ENCODE measurements at regions of chr20 and their contacts with region 1.

Region 1: GRCh38 chr20:47392015-47392720 is 35.7 kb upstream of the ZMYND8 start:
- DNase-seq: no peak
- ATAC-seq: peak; percentile 74
- H3K4me3 Mint-ChIP-seq: peak overlapping the region; percentile 55
- H3K27ac Mint-ChIP-seq: peak overlapping the region; percentile 95
- H3K4me1 Mint-ChIP-seq: peaks cover 47% of the 10 kb centered on the region
- H3K27me3 Mint-ChIP-seq: no peaks in the 10 kb centered on the region
- CTCF ChIP-seq: no peak

Region 2: GRCh38 chr20:47348539-47349142 is 43.5 kb before region 1 on chr20:
- CTCF ChIA-PET with region 1: no interaction called
- POLR2A ChIA-PET with region 1: interaction called, 17 read pairs
- intact Hi-C with region 1: no loop called
- DNase-seq: no peak
- ATAC-seq: peak; percentile 23
- H3K4me3 Mint-ChIP-seq: no peak overlapping the region
- H3K27ac Mint-ChIP-seq: no peak overlapping the region
- H3K4me1 Mint-ChIP-seq: peaks cover 8% of the 10 kb centered on the region
- H3K27me3 Mint-ChIP-seq: no peaks in the 10 kb centered on the region
- CTCF ChIP-seq: no peak

Region 3: GRCh38 chr20:47487175-47487917 is 95.2 kb after region 1 on chr20:
- CTCF ChIA-PET with region 1: no interaction called
- POLR2A ChIA-PET with region 1: interaction called, 13 read pairs
- intact Hi-C with region 1: loop called (anchors 1 kb)
- DNase-seq: peak; percentile 42
- ATAC-seq: peak; percentile 77
- H3K4me3 Mint-ChIP-seq: peak overlapping the region; percentile 72
- H3K27ac Mint-ChIP-seq: peak overlapping the region; percentile 97
- H3K4me1 Mint-ChIP-seq: peaks cover 79% of the 10 kb centered on the region
- H3K27me3 Mint-ChIP-seq: no peaks in the 10 kb centered on the region
- CTCF ChIP-seq: no peak

Region 4: GRCh38 chr20:47610247-47610944 is 218.2 kb after region 1 on chr20:
- CTCF ChIA-PET with region 1: no interaction called
- POLR2A ChIA-PET with region 1: interaction called, 8 read pairs
- intact Hi-C with region 1: loop called (anchors 5 kb)
- DNase-seq: no peak
- ATAC-seq: peak; percentile 91
- H3K4me3 Mint-ChIP-seq: peak overlapping the region; percentile 65
- H3K27ac Mint-ChIP-seq: peak overlapping the region; percentile 88
- H3K4me1 Mint-ChIP-seq: peaks cover 78% of the 10 kb centered on the region
- H3K27me3 Mint-ChIP-seq: no peaks in the 10 kb centered on the region
- CTCF ChIP-seq: no peak